Calu3 (cell line): ENCODE measurements at regions of chr16 and their contacts with region 1.

Region 1: DNA sequence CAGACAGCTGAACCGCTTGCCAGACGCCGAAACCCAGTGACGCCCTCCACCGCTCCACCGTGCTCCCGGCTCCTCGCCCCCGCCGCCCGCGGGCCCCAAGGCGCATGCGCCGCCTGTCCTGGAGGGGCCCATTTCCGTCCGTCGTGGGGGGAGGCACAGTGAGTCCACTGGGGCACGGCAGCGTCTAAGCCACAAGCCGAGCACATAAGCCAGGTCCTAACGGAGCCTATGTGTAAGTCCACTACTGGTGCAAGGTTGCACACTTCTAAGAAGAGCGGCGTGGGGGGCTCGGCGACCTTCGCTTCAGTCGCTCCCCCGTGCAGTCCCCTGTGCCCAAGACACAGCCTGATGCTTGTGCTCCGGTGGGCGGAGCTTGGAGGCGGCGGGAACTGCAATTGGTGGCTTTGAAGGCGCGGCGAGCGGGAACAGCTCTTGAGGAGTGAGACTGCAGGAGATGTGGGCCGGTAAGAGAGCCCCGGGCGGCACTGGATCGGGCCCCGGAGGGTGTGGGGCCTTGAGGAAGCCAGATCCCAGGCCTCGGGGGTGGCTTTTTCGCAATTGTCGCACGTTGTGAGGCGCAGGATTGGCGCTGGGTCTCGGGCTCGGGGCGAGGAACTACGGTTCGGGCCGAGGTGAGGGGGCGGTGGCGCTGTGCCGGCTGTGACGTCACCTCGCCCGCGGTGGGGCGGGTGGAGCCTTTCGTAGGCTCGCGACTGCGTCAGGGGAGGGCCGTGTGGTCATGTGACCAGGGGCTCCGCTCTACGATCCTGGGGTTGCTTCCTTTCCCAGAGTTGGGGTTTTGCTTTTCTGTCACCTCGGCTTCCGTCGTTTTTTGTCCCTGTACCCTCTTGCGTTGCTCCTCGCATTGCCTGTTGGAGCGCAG is at the starts of genes CENPN and CMC2:
- DNase-seq: peak; percentile 98
- H3K4me3 Mint-ChIP-seq: peak within 1 kb of the TSS; percentile 95
- H3K27ac Mint-ChIP-seq: peak within 1 kb of the TSS; percentile 99
- H3K4me1 Mint-ChIP-seq: peaks cover 29% of the 10 kb centered on the region
- H3K27me3 Mint-ChIP-seq: no peaks in the 10 kb centered on the region
- CTCF ChIP-seq: no peak
- total RNA-seq, gene CENPN: 72.2 and 81.5 TPM in 2 replicates
- total RNA-seq, gene CMC2: 111 and 123 TPM in 2 replicates

Region 2: GRCh38 chr16:80931801-80932712 is 75.0 kb before region 1 on chr16:
- CTCF ChIA-PET with region 1: no interaction called
- intact Hi-C with region 1: loop called (anchors 5 kb)
- DNase-seq: peak; percentile 62
- H3K4me3 Mint-ChIP-seq: peak overlapping the region; percentile 76
- H3K27ac Mint-ChIP-seq: peak overlapping the region; percentile 41
- H3K4me1 Mint-ChIP-seq: peaks cover 7% of the 10 kb centered on the region
- H3K27me3 Mint-ChIP-seq: peaks cover 46% of the 10 kb centered on the region
- CTCF ChIP-seq: no peak